Mammary epithelial cell (primary cell): ENCODE measurements at regions of chr4 and their contacts with region 1.

Region 1: DNA sequence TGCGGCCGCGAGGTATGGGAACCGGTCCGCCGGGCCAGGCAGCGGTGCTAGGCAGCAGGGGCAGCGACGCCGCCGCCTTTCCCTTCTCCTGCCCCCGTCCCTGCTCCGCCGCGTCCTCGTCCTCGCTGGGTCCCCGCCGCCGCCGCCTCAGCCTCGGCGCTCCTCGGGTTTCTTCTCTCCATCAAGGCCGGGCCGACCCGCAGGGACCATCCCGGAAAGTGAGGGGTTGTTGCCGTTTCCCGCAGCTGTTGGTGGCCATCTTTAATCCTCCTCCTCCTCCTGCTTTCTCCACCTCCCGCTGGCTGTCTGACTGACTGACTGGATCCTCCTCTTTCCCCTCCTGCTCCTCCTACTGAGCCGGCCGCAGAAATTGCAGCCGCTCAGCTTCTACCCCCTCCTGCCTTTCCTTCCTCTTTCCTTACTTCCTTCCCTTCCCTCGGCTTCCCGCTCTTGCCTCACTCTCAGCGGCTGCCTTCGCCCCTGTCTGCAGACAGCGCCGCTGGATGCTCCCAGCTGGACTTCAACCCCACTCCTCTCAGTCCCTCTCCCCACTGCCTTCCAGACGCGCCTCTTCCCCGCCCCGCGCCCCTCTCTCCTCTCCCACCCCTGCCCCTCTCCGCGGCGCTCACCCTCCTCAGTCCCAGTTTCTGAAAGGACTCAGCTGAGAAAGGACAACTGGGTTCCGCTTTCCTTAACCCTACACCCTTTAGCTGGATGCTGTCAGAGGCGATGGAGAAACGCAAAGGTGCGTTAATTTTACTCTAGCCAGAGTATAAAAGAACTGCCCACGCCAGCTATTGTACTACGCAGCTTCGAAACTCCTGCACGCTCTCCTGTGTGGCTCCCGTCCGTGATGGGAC is at the start of gene WDFY3:
- DNase-seq: peak; percentile 89
- H3K4me3 ChIP-seq: peak within 1 kb of the TSS; percentile 57 to 96 (median 91)
- H3K27ac ChIP-seq: peak within 1 kb of the TSS; percentile 74
- H3K4me1 ChIP-seq: peaks cover 6% of the 10 kb centered on the region
- H3K27me3 ChIP-seq: no peaks in the 10 kb centered on the region
- CTCF ChIP-seq: peak in 1 of 2 donors; percentile 21
- total RNA-seq, gene WDFY3: 72.9 to 118 TPM

Region 2: GRCh38 chr4:84582302-84583000 is 384.2 kb before region 1 on chr4:
- CTCF ChIA-PET with region 1: interaction called, 3 read pairs
- dilution Hi-C with region 1: no loop called
- in situ Hi-C with region 1: loop called (anchors 5 to 10 kb)
- intact Hi-C with region 1: loop called (anchors 1 kb)
- DNase-seq: peak; percentile 93
- H3K4me3 ChIP-seq: peak overlapping the region; percentile 56 to 78 (median 64)
- H3K27ac ChIP-seq: peak overlapping the region; percentile 90
- H3K4me1 ChIP-seq: peaks cover 32% of the 10 kb centered on the region
- H3K27me3 ChIP-seq: no peaks in the 10 kb centered on the region
- CTCF ChIP-seq: no peak

Region 3: DNA sequence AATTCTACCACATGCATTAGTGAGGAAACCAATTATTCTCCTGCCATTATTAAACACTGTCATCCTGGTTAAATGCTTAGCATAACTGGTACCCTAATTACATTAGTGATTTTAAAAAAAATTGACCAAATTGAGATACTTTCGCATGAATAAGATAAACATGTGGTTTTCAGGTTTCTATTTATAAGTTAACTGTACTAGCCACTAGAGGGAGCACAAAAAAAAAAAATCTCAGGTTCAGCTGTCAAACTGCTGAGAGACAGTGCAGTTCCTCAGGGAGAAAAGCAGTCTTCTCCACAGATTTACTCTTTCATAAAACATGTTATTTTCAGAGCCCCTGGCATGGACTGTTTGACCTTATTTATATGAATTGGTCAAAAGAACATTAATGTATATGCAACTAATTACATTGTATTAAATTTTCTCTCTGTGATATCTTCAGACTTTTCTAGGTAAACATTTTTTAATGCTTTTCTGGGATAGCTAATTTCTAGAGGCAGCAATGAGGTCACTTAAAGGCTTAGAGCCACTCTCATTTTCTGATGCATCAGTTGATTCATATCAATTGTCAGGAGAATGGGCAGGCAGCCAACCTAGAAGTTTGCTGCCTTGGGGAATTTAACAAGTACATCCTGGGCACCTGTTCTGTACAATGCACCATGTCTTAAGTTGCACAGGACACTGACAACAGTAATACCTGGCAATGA is 216.2 kb before region 1 on chr4:
- CTCF ChIA-PET with region 1: no interaction called
- dilution Hi-C with region 1: no loop called
- in situ Hi-C with region 1: loop called (anchors 5 to 10 kb)
- intact Hi-C with region 1: loop called (anchors 1 kb)
- DNase-seq: peak; percentile 17
- H3K4me3 ChIP-seq: no peak overlapping the region
- H3K27ac ChIP-seq: no peak overlapping the region
- H3K4me1 ChIP-seq: no peaks in the 10 kb centered on the region
- H3K27me3 ChIP-seq: no peaks in the 10 kb centered on the region
- CTCF ChIP-seq: peak; percentile 31 to 59

Region 4: DNA sequence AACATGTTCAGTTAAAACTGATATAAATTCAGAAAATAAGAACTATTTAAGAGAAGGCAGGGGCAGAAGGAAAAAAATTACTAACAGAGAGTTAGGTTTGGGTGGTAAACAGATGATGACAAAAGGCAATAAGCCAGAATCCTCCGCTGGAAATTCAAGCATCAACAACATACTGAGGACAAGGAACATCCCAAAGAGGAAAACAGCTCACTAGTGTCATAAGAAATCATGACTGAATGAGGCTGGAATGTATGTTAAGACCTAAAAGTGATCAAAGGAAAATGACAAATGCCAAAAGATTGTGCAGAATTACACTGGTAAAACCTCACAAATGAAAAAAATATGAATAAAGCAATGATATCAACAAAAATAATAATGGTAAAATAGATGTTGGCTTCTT is 88.5 kb before region 1 on chr4:
- CTCF ChIA-PET with region 1: no interaction called
- dilution Hi-C with region 1: no loop called
- in situ Hi-C with region 1: no loop called
- intact Hi-C with region 1: loop called (anchors 5 kb)
- DNase-seq: peak; percentile 57
- H3K4me3 ChIP-seq: no peak overlapping the region
- H3K27ac ChIP-seq: no peak overlapping the region
- H3K4me1 ChIP-seq: peaks cover 5% of the 10 kb centered on the region
- H3K27me3 ChIP-seq: no peaks in the 10 kb centered on the region
- CTCF ChIP-seq: no peak

Region 5: GRCh38 chr4:84920617-84921016 is 46.0 kb before region 1 on chr4:
- CTCF ChIA-PET with region 1: no interaction called
- dilution Hi-C with region 1: no loop called
- in situ Hi-C with region 1: no loop called
- intact Hi-C with region 1: loop called (anchors 5 kb)
- DNase-seq: peak; percentile 54
- H3K4me3 ChIP-seq: peak overlapping the region in 1 of 3 experiments; percentile 10
- H3K27ac ChIP-seq: peak overlapping the region; percentile 62
- H3K4me1 ChIP-seq: peaks cover 10% of the 10 kb centered on the region
- H3K27me3 ChIP-seq: no peaks in the 10 kb centered on the region
- CTCF ChIP-seq: no peak

Region 6: GRCh38 chr4:85058551-85058950 is 91.9 kb after region 1 on chr4:
- CTCF ChIA-PET with region 1: no interaction called
- dilution Hi-C with region 1: no loop called
- in situ Hi-C with region 1: no loop called
- intact Hi-C with region 1: no loop called
- DNase-seq: no peak
- H3K4me3 ChIP-seq: no peak overlapping the region
- H3K27ac ChIP-seq: no peak overlapping the region
- H3K4me1 ChIP-seq: peaks cover 3% of the 10 kb centered on the region
- H3K27me3 ChIP-seq: no peaks in the 10 kb centered on the region
- CTCF ChIP-seq: no peak

Region 7: GRCh38 chr4:85632981-85633380 is 666.4 kb after region 1 on chr4:
- CTCF ChIA-PET with region 1: no interaction called
- dilution Hi-C with region 1: no loop called
- in situ Hi-C with region 1: no loop called
- intact Hi-C with region 1: no loop called
- DNase-seq: no peak
- H3K4me3 ChIP-seq: no peak overlapping the region
- H3K27ac ChIP-seq: no peak overlapping the region
- H3K4me1 ChIP-seq: no peaks in the 10 kb centered on the region
- H3K27me3 ChIP-seq: no peaks in the 10 kb centered on the region
- CTCF ChIP-seq: no peak